H1 (cell line): ENCODE measurements at regions of chr4 and their contacts with region 1.

Region 1: DNA sequence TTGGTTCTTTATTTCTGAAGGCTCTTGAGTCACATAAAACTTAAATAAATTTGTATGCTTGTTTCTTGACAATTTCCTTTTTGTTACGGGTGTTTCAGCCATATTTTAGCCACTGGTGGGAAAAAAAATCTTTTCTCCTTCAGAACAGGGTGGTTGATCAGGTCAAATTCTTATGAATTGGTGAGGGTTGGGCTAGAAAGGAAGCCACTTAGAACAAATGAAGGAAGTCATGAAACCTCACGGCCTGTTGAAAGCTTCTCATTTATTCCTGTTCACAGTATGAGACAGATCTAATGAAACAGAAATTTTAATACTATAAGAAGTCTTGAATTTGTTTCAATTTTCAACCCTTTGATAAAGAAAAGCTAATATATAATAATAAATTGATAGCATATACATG is 12.1 kb upstream of the PDLIM5 start:
- DNase-seq: no peak
- H3K4me3 ChIP-seq: no peak overlapping the region
- H3K27ac ChIP-seq: no peak overlapping the region
- H3K4me1 ChIP-seq: no peaks in the 10 kb centered on the region
- H3K27me3 ChIP-seq: no peaks in the 10 kb centered on the region
- CTCF ChIP-seq: no peak
- EP300 ChIP-seq: no peak
- POLR2A ChIP-seq: no peak
- RAD21 ChIP-seq: no peak

Region 2: DNA sequence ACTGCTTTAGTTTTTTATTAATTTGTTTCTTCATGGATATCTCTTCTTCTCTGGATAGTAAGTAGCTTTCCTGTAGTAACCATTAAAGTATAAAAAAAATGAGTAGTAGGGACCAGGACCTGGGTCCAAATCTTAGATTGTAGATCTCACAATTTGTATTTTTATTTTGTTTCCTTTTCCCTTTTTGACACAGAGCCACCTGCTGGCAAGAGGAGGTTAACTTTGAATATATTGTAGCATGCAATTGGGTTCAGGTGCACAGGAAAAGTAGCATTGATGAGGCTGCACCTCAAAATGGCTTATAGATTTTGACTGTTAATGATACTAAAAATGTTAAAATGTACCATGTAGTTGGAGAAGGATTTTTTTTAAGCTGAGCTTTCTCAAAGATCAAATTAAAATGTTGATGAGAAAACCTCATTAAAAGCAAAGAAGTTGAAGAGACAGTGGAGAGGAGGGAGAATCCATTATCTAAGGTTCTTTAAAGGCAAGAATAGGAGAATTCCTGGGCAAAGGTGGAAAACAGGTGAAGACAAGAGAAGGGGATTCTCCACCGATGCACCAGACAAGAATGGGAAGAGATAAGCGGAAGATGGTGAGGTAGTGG is 48.7 kb before region 1 on chr4:
- CTCF ChIA-PET with region 1: no interaction called
- POLR2A ChIA-PET with region 1: no interaction called
- DNase-seq: no peak
- H3K4me3 ChIP-seq: no peak overlapping the region
- H3K27ac ChIP-seq: no peak overlapping the region
- H3K4me1 ChIP-seq: no peaks in the 10 kb centered on the region
- H3K27me3 ChIP-seq: no peaks in the 10 kb centered on the region
- CTCF ChIP-seq: peak in 2 of 3 experiments; percentile 23 to 46; a peak in 2 of 4 replicates
- EP300 ChIP-seq: no peak
- POLR2A ChIP-seq: no peak
- RAD21 ChIP-seq: peak; percentile 36 to 37

Region 3: GRCh38 chr4:94451695-94452475 is 12.3 kb after region 1 on chr4 and contains the start of gene PDLIM5:
- CTCF ChIA-PET with region 1: interaction called, 4 read pairs
- POLR2A ChIA-PET with region 1: interaction called, 11 read pairs
- DNase-seq: peak; percentile 75 to 91
- H3K4me3 ChIP-seq: peak within 1 kb of the TSS; percentile 56 to 91 (median 77)
- H3K27ac ChIP-seq: peak within 1 kb of the TSS; percentile 51
- H3K4me1 ChIP-seq: peaks cover 0 to 8% (median 4%) of the 10 kb centered on the region in 4 experiments; a peak in 6 of 7 replicates
- H3K27me3 ChIP-seq: peaks cover 0 to 3% (median 0%) of the 10 kb centered on the region in 4 experiments; a peak in 1 of 7 replicates
- CTCF ChIP-seq: no peak
- EP300 ChIP-seq: peak in 1 of 2 experiments; percentile 83; a peak in 1 of 3 replicates
- POLR2A ChIP-seq: peak; percentile 85; a peak in 2 of 3 replicates
- RAD21 ChIP-seq: peak in 1 of 2 experiments; percentile 4; a peak in 1 of 4 replicates
- total RNA-seq, gene PDLIM5: 58.9 and 62.1 TPM in 2 replicates

Region 4: GRCh38 chr4:94678896-94679295 is 239.3 kb after region 1 on chr4:
- CTCF ChIA-PET with region 1: no interaction called
- POLR2A ChIA-PET with region 1: no interaction called
- DNase-seq: no peak
- H3K4me3 ChIP-seq: no peak overlapping the region
- H3K27ac ChIP-seq: no peak overlapping the region
- H3K4me1 ChIP-seq: peaks cover 0 to 6% (median 0%) of the 10 kb centered on the region in 4 experiments; a peak in 1 of 7 replicates
- H3K27me3 ChIP-seq: no peaks in the 10 kb centered on the region
- CTCF ChIP-seq: no peak
- EP300 ChIP-seq: no peak
- POLR2A ChIP-seq: no peak
- RAD21 ChIP-seq: no peak

Region 5: GRCh38 chr4:94788643-94789042 is 349.0 kb after region 1 on chr4:
- CTCF ChIA-PET with region 1: no interaction called
- POLR2A ChIA-PET with region 1: no interaction called
- DNase-seq: no peak
- H3K4me3 ChIP-seq: no peak overlapping the region
- H3K27ac ChIP-seq: no peak overlapping the region
- H3K4me1 ChIP-seq: peaks cover 0 to 2% (median 0%) of the 10 kb centered on the region in 4 experiments; a peak in 2 of 7 replicates
- H3K27me3 ChIP-seq: no peaks in the 10 kb centered on the region
- CTCF ChIP-seq: no peak
- EP300 ChIP-seq: no peak
- POLR2A ChIP-seq: no peak
- RAD21 ChIP-seq: no peak